Activated CD4-positive, alpha-beta T cell treated with anti-CD3 and anti-CD28 coated beads, Interleukin-2, amount 10 ng/mL, durations not matched to agents 24 days and 14 days (primary cell): ENCODE measurements at regions of chrX and their contacts with region 1.

Region 1: GRCh38 chrX:19840899-19841648 is 46.3 kb downstream of the SH3KBP1 start:
- DNase-seq: peak; percentile 85
- H3K4me3 Mint-ChIP-seq: peak overlapping the region; percentile 75
- H3K27ac Mint-ChIP-seq: peak overlapping the region; percentile 95
- H3K4me1 Mint-ChIP-seq: peaks cover 42% of the 10 kb centered on the region
- H3K27me3 Mint-ChIP-seq: no peaks in the 10 kb centered on the region

Region 2: GRCh38 chrX:19747652-19748610 is 93.1 kb before region 1 on chrX:
- intact Hi-C with region 1: loop called (anchors 5 kb)
- DNase-seq: peak; percentile 92
- H3K4me3 Mint-ChIP-seq: peak overlapping the region; percentile 68
- H3K27ac Mint-ChIP-seq: peak overlapping the region; percentile 97
- H3K4me1 Mint-ChIP-seq: peaks cover 72% of the 10 kb centered on the region
- H3K27me3 Mint-ChIP-seq: no peaks in the 10 kb centered on the region

Region 3: GRCh38 chrX:19799319-19800182 is 41.5 kb before region 1 on chrX:
- intact Hi-C with region 1: loop called (anchors 1 kb)
- DNase-seq: peak; percentile 80
- H3K4me3 Mint-ChIP-seq: peak overlapping the region; percentile 85
- H3K27ac Mint-ChIP-seq: peak overlapping the region; percentile 94
- H3K4me1 Mint-ChIP-seq: peaks cover 60% of the 10 kb centered on the region
- H3K27me3 Mint-ChIP-seq: no peaks in the 10 kb centered on the region

Region 4: DNA sequence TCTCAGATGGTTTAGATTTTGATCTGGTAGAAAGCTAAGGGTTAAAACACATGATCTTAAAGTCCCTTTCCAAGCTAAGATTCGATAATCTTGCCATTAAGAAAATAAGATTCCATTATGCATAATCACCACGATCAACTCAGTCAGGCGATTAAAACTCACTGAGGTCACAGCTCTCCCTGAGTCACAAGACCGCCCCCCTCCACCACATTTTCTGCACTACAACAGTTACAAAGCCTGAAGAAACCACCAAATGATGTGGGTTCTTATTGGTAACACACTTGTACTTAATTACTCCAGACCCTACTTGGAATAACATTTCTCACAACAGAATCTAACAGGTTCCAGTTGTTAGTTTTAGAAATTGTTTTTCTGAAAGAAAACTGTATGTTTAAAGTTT is 16.5 kb before region 1 on chrX:
- intact Hi-C with region 1: no loop called
- DNase-seq: no peak
- H3K4me3 Mint-ChIP-seq: no peak overlapping the region
- H3K27ac Mint-ChIP-seq: no peak overlapping the region
- H3K4me1 Mint-ChIP-seq: peaks cover 20% of the 10 kb centered on the region
- H3K27me3 Mint-ChIP-seq: no peaks in the 10 kb centered on the region

Region 5: GRCh38 chrX:20101934-20102581 is 261.0 kb after region 1 on chrX:
- intact Hi-C with region 1: no loop called
- DNase-seq: no peak
- H3K4me3 Mint-ChIP-seq: no peak overlapping the region
- H3K27ac Mint-ChIP-seq: no peak overlapping the region
- H3K4me1 Mint-ChIP-seq: peaks cover 4% of the 10 kb centered on the region
- H3K27me3 Mint-ChIP-seq: no peaks in the 10 kb centered on the region

Region 6: DNA sequence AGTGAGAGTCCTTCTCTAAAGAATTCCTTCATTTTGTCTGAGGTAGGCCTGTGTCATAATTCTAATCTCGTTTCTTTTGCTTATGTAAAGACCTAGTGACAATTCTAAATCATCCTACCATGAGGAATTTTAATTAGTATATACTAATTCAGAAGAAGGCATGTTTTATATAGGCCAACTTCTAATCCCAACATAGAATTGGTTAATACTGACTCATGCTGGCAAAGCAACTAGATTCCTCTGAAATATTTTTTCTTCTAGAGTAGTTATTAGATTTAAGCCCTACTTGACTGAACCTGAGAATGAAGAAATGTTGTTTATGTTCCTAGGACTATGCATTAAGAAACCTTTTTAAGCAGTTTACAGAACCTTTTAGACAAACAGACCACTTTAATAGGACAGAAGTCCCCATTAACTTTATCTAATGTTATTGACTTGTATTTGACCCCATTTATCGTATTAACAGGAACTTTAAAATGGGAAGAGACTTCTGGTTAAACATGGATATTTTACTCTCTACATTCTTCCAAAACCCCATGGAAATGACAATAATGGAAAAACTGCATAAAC is 356.7 kb after region 1 on chrX:
- intact Hi-C with region 1: no loop called
- DNase-seq: no peak
- H3K4me3 Mint-ChIP-seq: no peak overlapping the region
- H3K27ac Mint-ChIP-seq: no peak overlapping the region
- H3K4me1 Mint-ChIP-seq: peaks cover 15% of the 10 kb centered on the region
- H3K27me3 Mint-ChIP-seq: no peaks in the 10 kb centered on the region

Region 7: DNA sequence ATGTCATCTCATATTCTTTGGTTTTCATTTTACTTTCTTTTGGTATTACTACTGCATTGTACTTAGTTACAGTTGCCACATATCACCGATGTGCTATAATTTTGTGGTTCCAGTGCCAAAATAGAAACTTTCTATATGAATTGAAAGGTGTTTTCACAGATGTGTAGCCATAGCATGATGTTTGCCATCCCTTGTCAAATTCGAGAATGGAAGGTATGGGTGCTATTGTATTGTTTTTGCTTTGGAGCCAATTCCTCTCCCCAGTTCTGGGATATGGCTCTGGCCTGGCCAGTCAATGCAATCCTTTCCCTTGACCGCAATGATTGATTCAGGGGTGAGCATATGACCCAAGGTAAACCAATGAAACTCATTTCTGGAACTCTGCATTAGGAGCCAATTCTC is 511.9 kb after region 1 on chrX:
- intact Hi-C with region 1: no loop called
- DNase-seq: no peak
- H3K4me3 Mint-ChIP-seq: no peak overlapping the region
- H3K27ac Mint-ChIP-seq: no peak overlapping the region
- H3K4me1 Mint-ChIP-seq: peaks cover 4% of the 10 kb centered on the region
- H3K27me3 Mint-ChIP-seq: no peaks in the 10 kb centered on the region